Panc1 (cell line): ENCODE measurements at regions of chr3 and their contacts with region 1.

Region 1: DNA sequence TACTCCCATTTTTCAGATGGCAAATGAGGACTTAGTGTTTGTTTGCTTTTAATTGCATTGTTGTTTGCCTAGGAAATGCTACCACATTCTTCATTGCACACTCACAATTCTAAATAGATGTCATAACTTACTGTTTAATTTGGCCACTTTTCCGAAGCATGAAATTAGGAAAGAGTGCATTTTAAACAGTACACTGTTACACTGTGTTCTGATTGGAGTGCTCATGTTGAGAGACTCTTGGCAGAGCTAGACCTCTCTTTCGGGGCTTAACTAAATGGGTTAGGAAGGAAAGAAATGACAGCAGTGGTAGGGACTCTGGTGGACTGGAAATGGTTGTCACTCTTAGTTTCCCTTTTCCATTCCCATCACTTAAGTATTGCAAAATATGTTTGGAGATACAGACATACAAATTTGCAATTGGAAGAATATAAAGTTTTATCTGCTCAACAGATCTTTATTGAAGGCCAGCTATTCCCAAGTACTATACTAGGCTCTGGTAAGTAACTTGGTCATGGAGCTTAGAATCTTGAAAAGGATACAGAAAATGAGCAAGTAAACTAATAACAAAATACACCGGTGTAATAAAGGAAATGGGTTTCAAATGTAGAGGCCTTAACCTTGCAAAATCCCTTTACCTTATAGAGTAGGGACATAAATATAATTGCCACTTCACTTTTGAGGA is 90.2 kb downstream of the DCUN1D1 start:
- DNase-seq: no peak
- ATAC-seq: peak; percentile 38; the same call in 1 of the 2 replicates
- H3K4me3 ChIP-seq: no peak overlapping the region
- H3K27ac ChIP-seq: no peak overlapping the region
- H3K4me1 ChIP-seq: no peaks in the 10 kb centered on the region
- H3K27me3 ChIP-seq: no peaks in the 10 kb centered on the region
- CTCF ChIP-seq: no peak

Region 2: GRCh38 chr3:183044547-183045229 is 154.6 kb after region 1 on chr3:
- CTCF ChIA-PET with region 1: no interaction called
- POLR2A ChIA-PET with region 1: interaction called, 17 read pairs
- in situ Hi-C with region 1: no loop called
- intact Hi-C with region 1: no loop called
- DNase-seq: no peak
- ATAC-seq: no peak
- H3K4me3 ChIP-seq: no peak overlapping the region
- H3K27ac ChIP-seq: no peak overlapping the region
- H3K4me1 ChIP-seq: no peaks in the 10 kb centered on the region
- H3K27me3 ChIP-seq: no peaks in the 10 kb centered on the region
- CTCF ChIP-seq: no peak